ENCODE measurements at regions of chr6 and their contacts with region 1.

Region 1: DNA sequence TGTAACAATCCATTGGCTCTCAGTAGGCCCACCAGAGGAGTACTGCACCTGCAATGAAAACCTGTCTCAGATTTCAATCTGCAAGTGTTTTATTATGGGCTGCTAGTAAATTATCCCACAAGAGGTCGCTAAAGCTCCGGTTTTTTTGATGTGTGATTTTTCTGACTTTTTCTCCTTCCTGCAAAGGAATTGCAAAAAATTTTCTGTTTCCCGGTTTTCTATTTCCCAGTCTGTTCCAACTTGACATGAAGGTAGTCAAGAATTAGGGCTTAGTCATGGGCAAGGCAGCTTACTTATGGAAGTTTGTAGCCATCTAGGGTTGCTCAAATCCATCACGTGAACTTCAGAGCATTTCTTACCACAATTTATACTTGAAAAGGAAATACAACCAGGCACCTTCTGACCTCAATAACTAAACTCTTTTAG is 38.5 kb upstream of the AHI1 start:
- DNase-seq: no peak
- ATAC-seq: peak in 1 of 2 donors; percentile 75

Region 2: GRCh38 chr6:134379086-134379485 is 1156.9 kb before region 1 on chr6:
- intact Hi-C with region 1: no loop called
- DNase-seq: no peak
- ATAC-seq: peak in 1 of 2 donors; percentile 21

Region 3: GRCh38 chr6:135592276-135592675 is 56.3 kb after region 1 on chr6:
- intact Hi-C with region 1: no loop called
- DNase-seq: no peak
- ATAC-seq: no peak

Region 4: DNA sequence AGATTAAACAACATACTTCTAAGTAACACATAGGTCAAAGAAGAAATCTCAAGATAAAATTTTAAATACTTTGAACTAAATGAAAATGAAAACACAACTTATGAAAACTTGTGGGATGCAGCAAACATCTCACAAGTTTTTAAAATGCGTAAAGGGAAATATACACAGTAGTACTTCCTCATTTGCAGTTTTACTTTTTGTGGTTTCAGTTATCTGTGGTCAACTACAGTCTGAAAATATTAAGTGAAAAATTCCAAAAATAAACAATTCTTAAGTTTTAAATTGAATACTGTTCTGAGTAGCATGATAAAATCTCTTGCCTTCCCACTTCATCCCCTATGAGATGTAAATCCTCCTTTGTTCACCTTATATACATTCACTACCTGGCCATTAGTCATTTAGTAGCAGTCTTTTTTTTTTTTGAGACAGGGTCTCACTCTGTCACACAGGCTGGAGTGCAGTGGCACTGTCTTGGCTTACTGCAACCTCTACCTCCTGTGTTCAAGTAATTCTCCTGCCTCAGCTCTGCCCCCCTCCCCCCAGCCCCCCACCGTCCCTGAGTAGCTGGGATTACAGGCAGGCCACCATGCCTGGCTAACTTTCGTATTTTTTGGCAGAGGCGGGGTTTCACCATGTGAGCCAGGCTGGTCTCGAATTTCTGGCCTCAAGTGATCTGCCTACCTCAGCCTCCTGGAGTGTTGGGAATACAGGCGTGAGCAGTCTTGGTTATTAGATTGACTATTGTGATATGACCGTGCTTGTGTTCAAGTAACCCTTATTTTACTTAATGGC is 116.2 kb after region 1 on chr6:
- intact Hi-C with region 1: no loop called
- DNase-seq: no peak
- ATAC-seq: no peak

Region 5: GRCh38 chr6:135938576-135939207 is 402.7 kb after region 1 on chr6:
- intact Hi-C with region 1: loop called in 1 of 2 experiments (anchors 10 kb)
- DNase-seq: peak; percentile 40
- ATAC-seq: peak; percentile 81 to 87

Region 6: GRCh38 chr6:136226027-136226673 is 690.1 kb after region 1 on chr6:
- intact Hi-C with region 1: loop called in 1 of 2 experiments (anchors 2 kb)
- DNase-seq: peak; percentile 45
- ATAC-seq: peak; percentile 77 to 88

Region 7: GRCh38 chr6:136317021-136317694 is 781.2 kb after region 1 on chr6:
- intact Hi-C with region 1: loop called in 1 of 2 experiments (anchors 10 kb)
- DNase-seq: peak; percentile 36
- ATAC-seq: peak; percentile 67 to 79